BJ (cell line): ENCODE measurements at regions of chr22 and their contacts with region 1.

Region 1: DNA sequence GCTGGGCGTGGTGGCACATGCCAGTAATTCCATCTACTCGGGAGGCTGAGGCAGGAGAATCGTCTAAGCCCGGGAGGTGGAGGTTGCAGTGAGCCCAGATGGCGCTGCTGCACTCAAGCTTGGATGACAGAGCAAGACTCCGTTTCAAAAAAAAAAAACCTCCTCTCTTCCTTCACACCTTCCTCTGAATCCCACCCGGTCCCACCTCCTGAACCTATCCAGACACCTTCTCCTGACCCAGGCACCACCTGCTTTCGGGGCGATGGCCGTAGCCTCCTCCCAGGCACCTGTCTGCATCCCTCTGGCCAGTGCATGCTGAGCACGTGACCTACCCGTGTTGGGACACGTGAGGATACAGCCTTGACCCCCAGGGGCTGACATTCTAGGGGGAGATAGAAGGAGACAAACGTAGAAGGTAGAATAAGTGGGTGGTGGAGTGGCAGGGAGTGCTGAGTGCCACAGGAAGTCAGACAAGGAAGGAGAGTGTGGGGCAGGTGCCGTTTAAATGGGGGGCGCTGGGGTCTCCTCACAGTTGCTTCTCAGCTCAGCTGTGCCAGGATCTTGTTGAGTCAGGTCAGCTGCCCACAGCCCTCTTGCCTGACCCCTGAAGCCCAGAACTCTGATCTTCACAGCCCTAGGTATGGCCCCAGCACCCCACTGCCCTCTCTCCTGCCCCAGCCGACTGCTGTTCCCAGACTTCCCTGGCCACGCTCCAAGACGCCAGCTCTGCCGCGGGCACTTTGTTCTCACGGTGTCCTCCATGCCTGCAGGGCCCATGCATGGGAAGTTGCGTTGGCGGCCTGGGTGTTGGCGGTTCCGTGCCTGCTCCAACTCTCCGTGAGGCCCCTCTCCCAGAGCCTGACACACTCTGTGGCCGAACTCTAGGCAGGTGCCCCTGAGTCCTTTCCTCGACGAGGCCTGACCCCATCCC is 1.2 kb upstream of the MIOX start:
- DNase-seq: no peak
- H3K4me3 ChIP-seq: no peak overlapping the region
- H3K27me3 ChIP-seq: 0 out of 2 replicates have a peak, but pooled peaks cover under 1% of the 10 kb centered on the region
- CTCF ChIP-seq: no peak

Region 2: DNA sequence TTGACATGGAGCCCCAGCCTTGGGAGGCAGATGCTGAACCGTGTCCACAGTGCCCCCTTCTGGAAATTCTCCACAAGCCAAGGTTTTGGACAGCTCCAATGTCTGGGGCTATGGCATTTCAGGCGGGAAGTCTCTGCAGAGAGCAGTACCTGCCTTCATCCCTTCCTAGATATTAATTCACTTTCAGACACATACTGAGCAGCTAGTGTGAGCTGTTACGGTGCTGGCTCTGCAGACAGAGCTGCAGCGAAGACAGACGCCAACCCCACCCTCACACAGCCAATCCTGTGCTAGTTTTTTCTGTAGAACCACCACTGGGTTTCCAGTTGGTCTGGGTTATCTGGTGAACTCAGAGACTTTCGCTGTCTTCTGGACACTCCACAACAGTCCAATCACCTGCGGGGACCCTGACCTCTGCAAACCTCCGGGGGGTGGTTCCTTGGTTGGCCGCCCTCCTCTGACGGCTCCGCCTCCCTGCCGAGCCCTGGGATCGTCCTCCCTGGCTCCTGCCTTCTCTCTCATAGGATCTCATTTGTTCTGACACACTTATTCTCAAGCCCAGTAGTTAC is 12.9 kb after region 1 on chr22:
- CTCF ChIA-PET with region 1: interaction called, 14 read pairs
- POLR2A ChIA-PET with region 1: interaction called, 10 read pairs
- DNase-seq: no peak
- H3K4me3 ChIP-seq: no peak overlapping the region
- H3K27me3 ChIP-seq: no peaks in the 10 kb centered on the region
- CTCF ChIP-seq: peak; percentile 72